H1 (cell line): ENCODE measurements at regions of chr14 and their contacts with region 1.

Region 1: GRCh38 chr14:58501214-58501816 is 73.8 kb downstream of the KIAA0586 start:
- DNase-seq: no peak
- H3K4me3 ChIP-seq: no peak overlapping the region
- H3K27ac ChIP-seq: no peak overlapping the region
- H3K4me1 ChIP-seq: no peaks in the 10 kb centered on the region
- H3K27me3 ChIP-seq: no peaks in the 10 kb centered on the region
- CTCF ChIP-seq: peak in 2 of 3 experiments; percentile 71 to 83; a peak in 3 of 4 replicates
- EP300 ChIP-seq: no peak
- POLR2A ChIP-seq: no peak
- RAD21 ChIP-seq: peak; percentile 92 to 93

Region 2: GRCh38 chr14:58465401-58465800 is 35.9 kb before region 1 on chr14:
- CTCF ChIA-PET with region 1: no interaction called
- POLR2A ChIA-PET with region 1: no interaction called
- DNase-seq: no peak
- H3K4me3 ChIP-seq: no peak overlapping the region
- H3K27ac ChIP-seq: no peak overlapping the region
- H3K4me1 ChIP-seq: no peaks in the 10 kb centered on the region
- H3K27me3 ChIP-seq: no peaks in the 10 kb centered on the region
- CTCF ChIP-seq: no peak
- EP300 ChIP-seq: no peak
- POLR2A ChIP-seq: no peak
- RAD21 ChIP-seq: no peak

Region 3: DNA sequence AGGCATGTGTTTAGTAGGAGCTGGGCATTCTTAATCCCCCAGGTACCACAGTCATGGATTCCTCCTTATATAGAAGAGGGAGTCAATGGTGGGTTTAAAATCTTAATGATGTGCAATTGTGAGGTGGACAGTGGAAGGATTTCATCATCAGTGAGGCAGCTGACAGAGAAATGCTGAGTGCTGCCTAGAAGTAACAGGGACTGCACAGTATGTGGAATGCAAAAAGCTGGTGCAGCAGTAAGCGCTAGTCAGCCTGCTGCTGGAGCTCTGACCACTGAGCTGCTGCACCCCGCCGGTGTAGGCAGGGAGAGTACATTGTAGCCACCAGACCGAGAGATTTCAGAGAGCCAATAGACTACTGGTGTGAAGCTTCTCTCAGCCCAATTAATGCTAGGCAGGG is 55.9 kb after region 1 on chr14:
- CTCF ChIA-PET with region 1: interaction called, 16 read pairs
- POLR2A ChIA-PET with region 1: no interaction called
- DNase-seq: no peak
- H3K4me3 ChIP-seq: no peak overlapping the region
- H3K27ac ChIP-seq: no peak overlapping the region
- H3K4me1 ChIP-seq: 0 out of 7 replicates have a peak, but pooled peaks cover 0 to 2% (median 0%) of the 10 kb centered on the region in 4 experiments
- H3K27me3 ChIP-seq: no peaks in the 10 kb centered on the region
- CTCF ChIP-seq: no peak
- EP300 ChIP-seq: no peak
- POLR2A ChIP-seq: no peak
- RAD21 ChIP-seq: no peak

Region 4: DNA sequence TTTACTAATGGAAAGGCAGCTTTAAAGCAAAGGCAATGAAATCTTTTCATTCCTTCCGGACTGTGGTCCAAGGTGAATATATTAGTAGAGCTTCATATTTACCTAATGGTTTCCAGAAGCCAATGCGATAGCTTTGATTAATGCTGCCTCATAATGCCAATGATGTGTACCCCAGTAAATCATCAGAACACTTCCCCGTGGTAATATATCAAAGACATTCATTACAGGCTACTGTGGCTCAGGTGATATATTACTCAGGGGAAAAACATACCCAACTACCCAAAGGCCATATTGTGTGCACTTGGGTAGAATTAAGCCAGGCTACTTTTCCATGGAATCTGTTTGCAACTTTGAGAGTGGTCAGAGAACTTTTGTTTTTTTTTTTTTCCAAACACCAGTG is 67.0 kb after region 1 on chr14:
- CTCF ChIA-PET with region 1: interaction called, 14 read pairs
- POLR2A ChIA-PET with region 1: no interaction called
- DNase-seq: no peak
- H3K4me3 ChIP-seq: no peak overlapping the region
- H3K27ac ChIP-seq: no peak overlapping the region
- H3K4me1 ChIP-seq: no peaks in the 10 kb centered on the region
- H3K27me3 ChIP-seq: no peaks in the 10 kb centered on the region
- CTCF ChIP-seq: no peak
- EP300 ChIP-seq: no peak
- POLR2A ChIP-seq: no peak
- RAD21 ChIP-seq: no peak

Region 5: GRCh38 chr14:58574623-58575022 is 73.3 kb after region 1 on chr14:
- CTCF ChIA-PET with region 1: interaction called, 33 read pairs
- POLR2A ChIA-PET with region 1: no interaction called
- DNase-seq: no peak
- H3K4me3 ChIP-seq: no peak overlapping the region
- H3K27ac ChIP-seq: no peak overlapping the region
- H3K4me1 ChIP-seq: no peaks in the 10 kb centered on the region
- H3K27me3 ChIP-seq: no peaks in the 10 kb centered on the region
- CTCF ChIP-seq: peak in 2 of 3 experiments; percentile 60 to 64; a peak in 3 of 4 replicates
- EP300 ChIP-seq: no peak
- POLR2A ChIP-seq: no peak
- RAD21 ChIP-seq: peak; percentile 64 to 73